Lower leg skin (tissue), 4 donors: ENCODE measurements at regions of chr18 and their contacts with region 1.

Region 1: DNA sequence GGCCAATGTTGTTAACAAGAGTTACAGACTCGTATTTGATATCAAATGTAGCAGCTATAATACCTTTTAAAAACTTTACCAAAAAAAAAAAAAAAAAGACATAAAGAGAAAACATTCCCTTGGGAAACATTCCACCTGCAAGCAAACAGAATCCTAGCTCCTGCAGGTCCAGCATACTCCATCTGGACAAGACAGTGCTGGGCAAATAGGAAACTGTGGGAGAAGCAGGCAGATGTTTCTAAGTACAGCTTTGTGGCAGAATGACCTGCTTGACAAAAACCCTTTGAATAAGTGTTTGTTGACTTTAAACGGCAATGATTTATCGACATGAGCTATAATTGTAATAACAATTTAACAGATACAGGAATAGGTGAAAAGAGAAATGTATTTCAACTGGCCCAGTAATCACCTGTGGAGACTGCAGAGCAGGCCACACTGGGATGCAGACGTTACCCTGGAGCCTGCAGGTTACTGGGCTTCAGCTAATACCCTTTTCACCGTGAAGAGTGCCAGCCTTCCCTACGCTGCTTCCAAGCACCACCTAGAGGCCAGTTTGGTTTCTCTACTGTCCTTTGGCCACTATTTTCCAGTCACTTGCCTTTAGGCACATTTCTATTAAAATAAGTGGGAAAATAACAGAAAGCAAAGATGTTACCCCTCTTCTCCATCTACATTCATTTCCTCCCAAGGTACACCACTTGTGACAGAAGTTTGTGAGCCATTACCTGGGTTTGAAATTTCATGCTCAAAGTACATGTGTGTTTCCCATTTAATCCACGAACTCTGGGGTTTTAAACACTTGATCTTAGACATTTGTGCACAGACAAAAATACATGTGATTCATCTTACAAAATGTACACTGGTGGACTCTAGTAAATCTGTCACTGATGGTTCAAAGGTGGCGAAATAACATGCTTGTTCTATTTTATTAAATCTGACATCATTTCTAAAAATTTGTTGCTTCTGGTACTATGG is 96.9 kb upstream of the ZNF397 start:
- DNase-seq: peak in 1 of 2 donors; percentile 26
- H3K4me3 ChIP-seq: no peak overlapping the region
- CTCF ChIP-seq: peak in 1 of 3 donors; percentile 36
- POLR2A ChIP-seq: no peak

Region 2: DNA sequence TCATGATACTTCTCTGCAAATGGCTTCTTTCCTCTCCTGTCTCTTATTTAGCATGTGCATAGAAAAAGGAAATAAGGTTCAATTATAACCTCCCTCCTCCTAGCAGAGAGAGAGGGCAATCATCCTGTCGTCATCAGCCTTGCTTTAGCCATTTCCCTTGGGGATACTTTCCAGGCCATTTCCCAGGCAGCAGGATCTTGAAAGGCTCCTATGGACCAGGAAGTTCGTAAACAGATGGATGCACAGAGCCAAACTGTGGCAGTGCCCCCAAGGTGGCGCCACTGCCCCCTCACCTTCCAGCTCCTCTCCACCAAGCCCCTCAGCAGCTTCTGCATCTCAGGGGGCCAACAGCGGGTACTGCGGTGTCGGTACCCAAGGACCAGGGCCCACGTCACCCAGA is 276.4 kb before region 1 on chr18:
- intact Hi-C with region 1: loop called (anchors 10 kb)
- DNase-seq: no peak
- H3K4me3 ChIP-seq: no peak overlapping the region
- CTCF ChIP-seq: no peak
- POLR2A ChIP-seq: no peak

Region 3: DNA sequence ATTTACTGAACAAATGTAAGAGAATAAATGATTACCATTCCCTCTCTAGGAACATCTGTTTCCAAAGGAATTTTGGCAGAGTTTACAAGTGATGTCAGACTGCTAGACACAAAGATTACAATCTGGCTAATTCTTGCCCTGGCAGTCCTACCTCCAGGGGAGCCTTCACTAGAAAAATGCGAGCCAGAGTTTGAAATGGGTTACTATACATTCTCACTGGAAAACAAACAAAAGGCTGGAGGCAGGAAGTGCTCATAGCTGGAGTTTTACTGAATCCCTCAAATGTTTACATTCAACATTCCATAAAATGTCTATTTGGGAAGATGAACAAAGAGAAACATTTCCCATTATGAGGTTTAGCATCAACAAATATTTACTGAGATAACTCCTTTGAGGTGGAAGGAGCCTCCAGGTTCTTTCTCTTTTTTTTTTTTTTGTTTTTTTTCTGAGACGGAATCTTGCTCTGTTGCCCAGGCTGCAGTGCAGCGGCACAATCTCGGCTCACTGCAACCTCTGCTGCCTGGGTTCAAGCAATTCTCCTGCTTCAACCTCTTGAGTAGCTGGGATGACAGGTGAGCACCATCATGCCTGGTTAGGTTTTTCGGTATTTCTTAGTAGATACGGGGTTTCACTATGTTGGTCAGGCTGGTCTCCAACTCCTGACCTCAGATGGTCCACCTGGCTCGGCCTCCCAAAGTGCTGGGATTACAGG is 231.7 kb before region 1 on chr18:
- intact Hi-C with region 1: no loop called
- DNase-seq: no peak
- H3K4me3 ChIP-seq: no peak overlapping the region
- CTCF ChIP-seq: no peak
- POLR2A ChIP-seq: no peak

Region 4: DNA sequence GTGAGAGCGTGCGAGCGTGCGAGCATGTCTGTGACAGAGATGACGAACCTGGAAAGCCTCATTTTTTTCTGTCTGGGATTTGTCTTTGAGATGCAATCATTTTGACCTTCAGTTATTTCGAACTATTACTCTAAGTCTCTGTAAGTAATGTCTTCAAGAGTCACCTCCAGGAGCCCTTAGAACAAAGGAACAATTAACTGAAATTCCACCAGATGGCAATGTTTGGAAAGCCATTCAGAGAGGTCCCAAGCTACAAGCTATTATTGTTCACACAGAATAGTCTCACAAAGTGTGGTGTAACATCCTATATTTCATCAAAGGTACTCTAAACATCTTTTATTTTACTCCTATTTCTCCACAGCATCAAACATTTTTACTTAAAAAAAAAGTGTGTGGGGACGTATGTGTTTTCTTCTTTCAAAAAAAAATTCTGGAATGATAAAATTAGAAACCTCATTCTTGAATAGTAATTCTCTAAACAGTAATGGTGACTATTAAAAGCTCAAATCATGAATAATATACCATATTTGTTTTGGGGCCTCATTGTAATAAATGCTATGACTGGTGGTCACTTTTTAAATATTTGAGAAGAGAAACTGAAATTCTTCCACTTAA is 137.8 kb before region 1 on chr18:
- intact Hi-C with region 1: loop called (anchors 10 kb)
- DNase-seq: no peak
- H3K4me3 ChIP-seq: no peak overlapping the region
- CTCF ChIP-seq: no peak
- POLR2A ChIP-seq: no peak

Region 5: GRCh38 chr18:35095983-35096676 is 47.8 kb before region 1 on chr18:
- intact Hi-C with region 1: no loop called
- DNase-seq: no peak
- H3K4me3 ChIP-seq: no peak overlapping the region
- CTCF ChIP-seq: no peak
- POLR2A ChIP-seq: no peak